ENCODE measurements at regions of chr3 and their contacts with region 1.

Region 1: DNA sequence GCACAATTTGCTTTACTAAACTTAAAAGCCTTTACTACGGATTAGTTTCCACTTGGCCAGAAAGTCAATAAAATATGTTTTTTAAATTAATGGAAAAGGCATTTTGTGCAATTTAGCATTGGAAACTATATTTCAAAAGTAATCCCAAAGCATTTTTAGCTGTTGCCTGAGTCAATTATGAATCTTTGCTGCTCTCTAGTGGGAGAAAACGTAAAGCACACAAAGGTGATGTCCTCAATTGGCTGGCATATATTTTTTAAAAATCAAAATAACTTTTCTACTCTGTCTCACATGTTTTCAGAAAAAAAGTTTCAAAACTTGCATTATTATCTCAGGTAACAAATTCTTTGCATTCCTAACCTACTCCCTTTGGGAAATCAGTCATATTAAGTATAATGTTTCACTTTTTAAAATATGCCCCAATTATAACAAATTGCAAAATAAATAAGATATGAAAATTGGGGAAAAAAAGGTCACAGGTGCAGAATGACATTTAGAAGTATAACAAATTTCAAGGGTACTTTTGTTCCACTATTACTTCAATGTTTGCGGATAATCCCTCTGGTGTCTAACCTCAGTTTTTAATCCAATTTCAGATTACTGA is 47.2 kb upstream of the TEX55 start:
- DNase-seq: no peak
- H3K4me3 ChIP-seq: no peak overlapping the region
- CTCF ChIP-seq: no peak
- POLR2A ChIP-seq: no peak

Region 2: DNA sequence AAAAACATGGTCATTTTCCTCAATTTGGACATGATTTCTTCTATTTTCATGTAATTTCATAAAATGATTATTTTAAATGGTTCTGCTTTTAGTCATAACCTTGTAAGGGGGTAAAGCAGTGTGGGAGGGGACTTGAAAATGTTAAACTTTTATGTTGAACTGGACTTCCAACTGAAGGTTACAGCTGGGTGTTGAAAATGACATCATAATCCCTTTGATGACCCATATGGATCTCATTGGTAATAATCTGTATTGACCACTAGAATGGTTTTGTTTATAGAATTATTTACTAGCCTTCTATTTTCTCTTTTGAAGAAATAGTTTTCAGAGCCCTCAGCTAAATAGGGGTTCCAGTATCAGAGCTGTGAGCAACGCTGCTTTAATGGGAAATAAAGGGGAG is 437.0 kb before region 1 on chr3:
- intact Hi-C with region 1: loop called (anchors 10 kb)
- DNase-seq: no peak
- H3K4me3 ChIP-seq: no peak overlapping the region
- CTCF ChIP-seq: no peak
- POLR2A ChIP-seq: no peak

Region 3: GRCh38 chr3:118884748-118885206 is 213.9 kb before region 1 on chr3:
- intact Hi-C with region 1: loop called (anchors 10 kb)
- DNase-seq: peak; percentile 51 to 90
- H3K4me3 ChIP-seq: no peak overlapping the region
- CTCF ChIP-seq: no peak
- POLR2A ChIP-seq: no peak

Region 4: GRCh38 chr3:119647171-119647570 is 548.5 kb after region 1 on chr3:
- intact Hi-C with region 1: no loop called
- DNase-seq: no peak
- H3K4me3 ChIP-seq: no peak overlapping the region
- CTCF ChIP-seq: no peak
- POLR2A ChIP-seq: no peak